H1 (cell line): ENCODE measurements at regions of chr4 and their contacts with region 1.

Region 1: GRCh38 chr4:26055855-26056254 is 141.8 kb downstream of the SMIM20 start:
- DNase-seq: no peak
- H3K4me3 ChIP-seq: no peak overlapping the region
- H3K27ac ChIP-seq: no peak overlapping the region
- H3K4me1 ChIP-seq: no peaks in the 10 kb centered on the region
- H3K27me3 ChIP-seq: no peaks in the 10 kb centered on the region
- CTCF ChIP-seq: peak in 2 of 3 experiments; percentile 20 to 37; a peak in 1 of 4 replicates
- EP300 ChIP-seq: no peak
- POLR2A ChIP-seq: no peak
- RAD21 ChIP-seq: peak in 1 of 2 experiments; percentile 27; a peak in 1 of 4 replicates

Region 2: DNA sequence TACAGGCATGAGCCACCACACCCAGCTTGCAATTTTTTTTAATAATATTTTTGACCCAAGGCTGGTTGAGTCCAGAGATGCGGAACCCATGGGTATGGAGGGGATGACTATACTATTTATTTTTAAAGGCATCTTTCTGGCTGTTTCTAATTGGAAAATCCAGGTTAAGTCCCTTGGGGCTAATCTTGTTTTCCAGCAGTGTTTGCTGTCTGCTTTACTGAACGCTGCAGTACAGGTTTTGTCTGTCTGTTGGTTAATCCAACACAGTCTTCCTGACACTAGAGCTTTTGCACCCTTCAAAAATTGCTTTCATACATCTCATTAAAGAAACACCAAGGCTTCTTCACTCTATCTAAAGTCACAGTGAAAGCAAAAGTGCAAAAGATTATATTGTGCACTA is 317.7 kb before region 1 on chr4:
- CTCF ChIA-PET with region 1: no interaction called
- POLR2A ChIA-PET with region 1: no interaction called
- DNase-seq: no peak
- H3K4me3 ChIP-seq: no peak overlapping the region
- H3K27ac ChIP-seq: no peak overlapping the region
- H3K4me1 ChIP-seq: no peaks in the 10 kb centered on the region
- H3K27me3 ChIP-seq: no peaks in the 10 kb centered on the region
- CTCF ChIP-seq: no peak
- EP300 ChIP-seq: no peak
- POLR2A ChIP-seq: no peak
- RAD21 ChIP-seq: no peak

Region 3: DNA sequence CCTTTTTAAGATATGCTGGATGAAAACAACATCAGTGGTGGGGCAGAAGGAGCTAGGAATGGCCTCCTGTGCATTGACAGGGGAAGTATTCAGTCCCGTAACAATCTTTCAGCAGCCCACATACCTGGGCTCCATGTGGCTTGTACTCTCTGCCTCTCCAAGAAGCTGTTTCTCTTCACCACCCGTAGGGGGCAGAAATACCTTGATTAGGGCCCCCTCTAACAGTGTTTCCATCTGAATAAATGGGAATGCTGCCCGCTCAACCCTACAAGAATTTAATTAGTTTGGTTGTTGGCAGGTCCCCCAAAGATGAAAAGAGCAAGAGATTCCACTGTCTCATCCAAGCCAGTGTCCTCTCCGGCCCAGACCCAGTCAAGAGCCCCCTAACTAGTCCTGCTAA is 13.4 kb after region 1 on chr4:
- CTCF ChIA-PET with region 1: interaction called, 26 read pairs
- POLR2A ChIA-PET with region 1: no interaction called
- DNase-seq: peak in 1 of 2 experiments; percentile 52
- H3K4me3 ChIP-seq: no peak overlapping the region
- H3K27ac ChIP-seq: no peak overlapping the region
- H3K4me1 ChIP-seq: no peaks in the 10 kb centered on the region
- H3K27me3 ChIP-seq: no peaks in the 10 kb centered on the region
- CTCF ChIP-seq: peak; percentile 39 to 79 (median 73)
- EP300 ChIP-seq: no peak
- POLR2A ChIP-seq: no peak
- RAD21 ChIP-seq: peak; percentile 73 to 84

Region 4: DNA sequence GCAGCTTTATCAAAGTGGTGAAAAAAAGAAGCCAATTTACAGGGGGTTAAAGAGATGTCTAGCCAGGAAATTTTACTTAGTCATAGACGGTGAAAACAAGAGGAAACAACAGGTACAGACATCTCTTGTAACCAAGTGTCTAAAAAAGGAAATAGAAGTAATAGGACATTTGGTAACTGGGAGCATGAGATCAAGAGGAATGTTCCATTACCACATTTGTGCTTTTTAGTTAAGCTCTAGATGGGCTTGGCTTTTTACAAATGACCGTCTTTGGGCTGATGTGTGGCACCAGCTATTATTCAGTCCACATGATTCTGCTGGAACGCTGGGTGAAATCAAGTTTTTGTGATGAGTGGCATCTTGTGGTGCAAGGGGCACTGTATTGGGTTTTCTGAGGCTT is 37.7 kb after region 1 on chr4:
- CTCF ChIA-PET with region 1: no interaction called
- POLR2A ChIA-PET with region 1: no interaction called
- DNase-seq: no peak
- H3K4me3 ChIP-seq: no peak overlapping the region
- H3K27ac ChIP-seq: no peak overlapping the region
- H3K4me1 ChIP-seq: no peaks in the 10 kb centered on the region
- H3K27me3 ChIP-seq: no peaks in the 10 kb centered on the region
- CTCF ChIP-seq: no peak
- EP300 ChIP-seq: no peak
- POLR2A ChIP-seq: no peak
- RAD21 ChIP-seq: no peak